Dendritic cell treated with granulocyte-macrophage colony-stimulating factor and Interleukin-4, amounts not matched to agents 40 ng/mL and 50 ng/mL, for 4 days (primary cell): ENCODE measurements at regions of chr7 and their contacts with region 1.

Region 1: GRCh38 chr7:17298207-17298839 is at the start of gene AHR:
- H3K4me3 Mint-ChIP-seq: peak within 1 kb of the TSS; percentile 99
- H3K27ac Mint-ChIP-seq: peak within 1 kb of the TSS; percentile 95
- H3K4me1 Mint-ChIP-seq: peaks cover 18% of the 10 kb centered on the region
- H3K27me3 Mint-ChIP-seq: no peaks in the 10 kb centered on the region

Region 2: DNA sequence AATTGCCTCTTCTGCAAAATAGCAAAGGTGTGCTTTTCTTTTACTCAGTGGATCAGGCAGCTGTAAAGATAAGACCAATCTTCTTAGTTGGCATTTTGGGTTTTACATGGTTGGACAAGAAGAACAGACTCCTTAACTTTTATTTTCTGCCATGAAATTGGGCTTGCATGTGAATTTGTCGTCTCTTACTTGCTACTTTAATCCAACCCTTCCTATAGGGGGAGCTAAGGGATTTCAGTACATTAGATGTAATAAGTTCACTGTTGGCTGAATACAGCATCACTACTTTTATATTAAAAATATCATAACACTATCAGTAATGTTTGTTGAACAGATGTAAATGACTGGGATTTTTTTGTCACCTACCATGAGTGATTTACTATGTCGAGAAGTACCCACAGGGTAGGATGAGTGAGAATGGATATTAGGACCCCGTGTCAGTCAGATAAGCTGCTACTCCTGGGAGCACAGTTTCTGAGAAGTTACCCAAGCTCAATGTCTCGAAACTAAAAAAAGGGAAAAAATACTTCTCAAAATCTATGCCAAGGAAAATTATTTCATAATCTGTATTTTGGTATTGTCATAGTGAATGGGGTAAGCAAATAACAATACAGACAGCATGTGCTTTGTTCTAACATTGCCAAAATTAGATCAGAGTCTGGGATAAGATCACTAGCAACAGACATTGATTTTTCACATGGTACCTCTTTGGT is 289.2 kb before region 1 on chr7:
- intact Hi-C with region 1: loop called (anchors 2 kb)
- H3K4me3 Mint-ChIP-seq: peak overlapping the region; percentile 9
- H3K27ac Mint-ChIP-seq: peak overlapping the region; percentile 75
- H3K4me1 Mint-ChIP-seq: peaks cover 67% of the 10 kb centered on the region
- H3K27me3 Mint-ChIP-seq: no peaks in the 10 kb centered on the region

Region 3: GRCh38 chr7:17152721-17153120 is 145.6 kb before region 1 on chr7:
- intact Hi-C with region 1: loop called (anchors 2 kb)
- H3K4me3 Mint-ChIP-seq: peak overlapping the region; percentile 50
- H3K27ac Mint-ChIP-seq: peak overlapping the region; percentile 89
- H3K4me1 Mint-ChIP-seq: peaks cover 56% of the 10 kb centered on the region
- H3K27me3 Mint-ChIP-seq: no peaks in the 10 kb centered on the region

Region 4: GRCh38 chr7:17234398-17235031 is 63.8 kb before region 1 on chr7:
- intact Hi-C with region 1: loop called (anchors 2 kb)
- H3K4me3 Mint-ChIP-seq: peak overlapping the region; percentile 57
- H3K27ac Mint-ChIP-seq: peak overlapping the region; percentile 96
- H3K4me1 Mint-ChIP-seq: peaks cover 53% of the 10 kb centered on the region
- H3K27me3 Mint-ChIP-seq: no peaks in the 10 kb centered on the region